MCF 10A (cell line): ENCODE measurements at regions of chr1 and their contacts with region 1.

Region 1: DNA sequence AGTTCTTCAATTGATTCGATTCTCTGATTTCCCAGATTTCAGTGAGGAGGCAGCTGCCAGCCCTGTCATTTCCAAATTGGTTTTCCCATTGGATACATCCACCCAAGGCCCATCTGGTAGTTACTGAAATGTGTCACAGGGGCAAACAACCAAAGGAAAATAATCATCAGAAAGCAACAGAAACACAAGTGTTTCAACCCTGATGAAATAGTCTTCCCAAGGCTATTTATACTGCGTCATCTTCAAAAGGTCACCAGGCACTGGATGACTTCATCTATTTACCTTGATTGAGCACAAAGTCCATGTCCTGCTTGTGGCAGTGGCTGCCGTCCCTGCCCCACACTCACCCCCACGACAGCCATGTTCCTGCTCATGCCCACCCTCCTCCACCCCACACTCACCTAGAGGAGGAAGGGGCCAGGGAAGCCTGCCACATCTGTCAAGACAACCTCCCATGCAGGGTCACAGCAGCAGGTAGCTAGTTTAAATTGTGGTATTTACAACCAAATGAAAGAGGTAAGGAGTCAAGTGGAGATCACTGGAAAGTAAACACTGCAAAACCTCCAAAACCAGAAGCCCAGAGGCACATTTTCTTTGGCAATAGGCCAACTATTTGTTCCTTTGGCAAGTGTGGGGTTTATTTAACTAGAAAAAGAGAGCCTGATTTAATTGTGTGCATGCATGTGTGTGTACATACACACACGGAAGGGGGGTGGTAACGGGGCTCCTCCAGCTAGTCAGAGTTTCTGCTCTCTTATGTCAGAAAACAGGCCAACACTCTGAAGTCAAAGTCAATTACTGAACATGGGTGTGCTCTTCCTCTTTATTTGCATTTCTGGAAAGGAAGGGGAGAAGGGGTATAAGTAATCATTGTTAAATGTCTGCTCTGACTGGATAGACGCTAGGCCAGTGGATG is 49.5 kb upstream of the RAB4A start:
- DNase-seq: peak; percentile 99
- H3K4me3 Mint-ChIP-seq: no peak overlapping the region
- H3K27ac Mint-ChIP-seq: no peak overlapping the region
- H3K4me1 Mint-ChIP-seq: peaks cover 20% of the 10 kb centered on the region
- H3K27me3 Mint-ChIP-seq: peaks cover 12% of the 10 kb centered on the region
- CTCF ChIP-seq: no peak

Region 2: DNA sequence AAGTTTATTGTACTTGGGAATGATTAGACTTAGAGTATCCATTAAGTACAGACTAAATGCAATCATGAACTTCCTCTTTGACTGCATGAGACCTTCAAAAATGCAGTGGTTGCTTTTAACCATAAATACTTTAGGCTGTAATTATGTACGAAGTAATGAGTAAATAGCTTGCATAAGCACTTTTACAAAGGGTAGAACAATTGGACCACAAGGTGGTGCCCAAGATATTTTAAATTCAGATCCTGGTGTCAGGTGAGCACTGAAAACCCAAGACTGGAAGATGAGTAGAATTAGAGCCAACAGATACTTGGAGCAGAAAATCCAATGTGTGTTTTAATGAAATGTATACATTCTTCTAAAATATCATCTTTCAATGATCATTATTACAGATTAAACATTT is 529.4 kb before region 1 on chr1:
- CTCF ChIA-PET with region 1: interaction called, 203 read pairs
- POLR2A ChIA-PET with region 1: interaction called, 7 read pairs
- intact Hi-C with region 1: no loop called
- DNase-seq: peak; percentile 84
- H3K4me3 Mint-ChIP-seq: no peak overlapping the region
- H3K27ac Mint-ChIP-seq: no peak overlapping the region
- H3K4me1 Mint-ChIP-seq: peaks cover 18% of the 10 kb centered on the region
- H3K27me3 Mint-ChIP-seq: no peaks in the 10 kb centered on the region
- CTCF ChIP-seq: peak; percentile 85

Region 3: DNA sequence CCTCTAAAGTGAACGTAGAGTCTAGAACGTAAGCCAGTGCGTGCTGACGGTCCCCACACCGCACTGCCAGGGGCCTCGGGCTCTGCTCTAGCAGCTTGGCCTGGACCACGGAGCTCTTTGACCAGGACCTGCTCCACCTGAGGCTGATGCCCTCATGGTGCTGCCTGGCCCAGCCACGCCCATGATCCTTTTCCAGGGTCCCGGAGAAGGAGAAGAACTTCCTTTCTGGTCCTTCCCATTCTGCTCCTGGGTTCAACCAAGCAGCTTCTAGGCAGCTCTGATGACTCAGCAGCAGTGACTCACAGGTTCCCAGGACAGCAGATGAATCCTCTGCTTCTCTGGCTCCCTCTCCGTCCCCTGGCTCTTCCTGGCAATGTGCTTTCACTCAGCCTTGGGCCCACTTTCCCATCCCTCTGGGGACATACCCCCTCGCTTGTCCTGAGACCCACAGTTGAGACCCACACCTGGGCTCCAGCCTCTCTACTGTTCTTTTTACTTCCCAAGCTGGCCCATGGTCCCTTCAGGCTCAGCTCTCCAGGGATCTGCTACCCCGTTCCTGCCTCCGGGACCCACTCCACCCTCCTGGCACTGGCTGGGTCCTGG is 196.7 kb before region 1 on chr1:
- CTCF ChIA-PET with region 1: interaction called, 19 read pairs
- POLR2A ChIA-PET with region 1: interaction called, 5 read pairs
- intact Hi-C with region 1: loop called (anchors 2 kb)
- DNase-seq: peak; percentile 98
- H3K4me3 Mint-ChIP-seq: no peak overlapping the region
- H3K27ac Mint-ChIP-seq: peak overlapping the region; percentile 21
- H3K4me1 Mint-ChIP-seq: peaks cover 25% of the 10 kb centered on the region
- H3K27me3 Mint-ChIP-seq: peaks cover 11% of the 10 kb centered on the region
- CTCF ChIP-seq: no peak

Region 4: GRCh38 chr1:229117664-229118300 is 103.6 kb before region 1 on chr1:
- CTCF ChIA-PET with region 1: interaction called, 26 read pairs
- POLR2A ChIA-PET with region 1: no interaction called
- intact Hi-C with region 1: loop called (anchors 2 kb)
- DNase-seq: peak; percentile 98
- H3K4me3 Mint-ChIP-seq: peak overlapping the region; percentile 15
- H3K27ac Mint-ChIP-seq: peak overlapping the region; percentile 55
- H3K4me1 Mint-ChIP-seq: peaks cover 26% of the 10 kb centered on the region
- H3K27me3 Mint-ChIP-seq: no peaks in the 10 kb centered on the region
- CTCF ChIP-seq: no peak

Region 5: GRCh38 chr1:229192031-229192430 is 29.3 kb before region 1 on chr1:
- CTCF ChIA-PET with region 1: interaction called, 5 read pairs
- POLR2A ChIA-PET with region 1: interaction called, 17 read pairs
- intact Hi-C with region 1: loop called (anchors 2 kb)
- DNase-seq: peak; percentile 94
- H3K4me3 Mint-ChIP-seq: peak overlapping the region; percentile 35
- H3K27ac Mint-ChIP-seq: peak overlapping the region; percentile 80
- H3K4me1 Mint-ChIP-seq: peaks cover 41% of the 10 kb centered on the region
- H3K27me3 Mint-ChIP-seq: no peaks in the 10 kb centered on the region
- CTCF ChIP-seq: no peak

Region 6: DNA sequence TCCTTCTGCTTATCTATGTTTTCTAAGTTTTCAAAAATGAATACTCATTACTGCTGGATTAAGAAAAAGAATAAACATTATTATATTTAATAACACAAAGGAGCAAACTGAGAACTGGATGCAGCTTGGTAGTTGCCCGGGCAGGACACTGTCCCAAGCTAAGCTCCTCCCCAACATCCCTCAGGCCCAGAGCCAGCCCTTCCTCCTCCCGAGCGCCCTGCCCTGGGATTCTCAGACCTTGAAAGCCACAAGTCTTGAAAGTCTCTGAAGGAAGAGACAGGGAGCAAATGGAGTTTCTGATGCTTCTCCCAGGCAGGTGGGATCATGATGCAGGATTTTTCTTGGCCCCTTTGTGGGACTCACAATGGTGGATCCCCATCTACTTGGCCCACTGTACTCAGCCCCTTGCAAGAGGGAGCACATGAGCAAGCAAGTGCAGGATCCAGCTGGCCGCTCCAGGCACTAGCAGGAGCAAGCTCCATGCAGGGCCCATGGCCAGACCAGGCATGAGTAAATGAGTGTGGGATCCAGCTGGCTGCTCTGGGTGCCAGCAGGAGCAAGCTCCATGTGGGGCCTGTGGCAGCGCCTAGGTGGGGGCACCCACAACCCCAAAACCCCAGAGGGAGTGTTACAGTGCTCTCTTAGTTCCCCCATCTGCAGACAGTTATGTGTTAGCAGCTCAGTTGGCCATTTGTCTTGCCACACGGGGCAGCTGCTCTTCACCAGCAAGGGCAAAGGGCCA is 17.5 kb after region 1 on chr1:
- CTCF ChIA-PET with region 1: interaction called, 7 read pairs
- POLR2A ChIA-PET with region 1: interaction called, 12 read pairs
- intact Hi-C with region 1: no loop called
- DNase-seq: peak; percentile 78
- H3K4me3 Mint-ChIP-seq: no peak overlapping the region
- H3K27ac Mint-ChIP-seq: peak overlapping the region; percentile 92
- H3K4me1 Mint-ChIP-seq: peaks cover 20% of the 10 kb centered on the region
- H3K27me3 Mint-ChIP-seq: no peaks in the 10 kb centered on the region
- CTCF ChIP-seq: no peak